Common myeloid progenitor, CD34-positive (primary cell): ENCODE measurements at regions of chr4 and their contacts with region 1.

Region 1: GRCh38 chr4:48127682-48128394 is 6.2 kb downstream of the TXK start:
- DNase-seq: peak; percentile 54 to 75 (median 74)
- H3K4me3 ChIP-seq: peak overlapping the region in 2 of 7 experiments; percentile 20 to 44
- H3K27ac ChIP-seq: no peak overlapping the region
- H3K4me1 ChIP-seq: peaks cover 0 to 30% (median 24%) of the 10 kb centered on the region in 4 experiments
- H3K27me3 ChIP-seq: no peaks in the 10 kb centered on the region

Region 2: GRCh38 chr4:48141048-48141447 is 13.2 kb after region 1 on chr4:
- CTCF ChIA-PET with region 1: interaction called, 47 read pairs
- POLR2A ChIA-PET with region 1: interaction called, 3 read pairs
- DNase-seq: peak; percentile 41 to 66 (median 64)
- H3K4me3 ChIP-seq: no peak overlapping the region
- H3K27ac ChIP-seq: no peak overlapping the region
- H3K4me1 ChIP-seq: peaks cover 0 to 9% (median 7%) of the 10 kb centered on the region in 4 experiments
- H3K27me3 ChIP-seq: no peaks in the 10 kb centered on the region

Region 3: GRCh38 chr4:48254381-48255071 is 126.7 kb after region 1 on chr4:
- CTCF ChIA-PET with region 1: no interaction called
- POLR2A ChIA-PET with region 1: no interaction called
- DNase-seq: no peak
- H3K4me3 ChIP-seq: no peak overlapping the region
- H3K27ac ChIP-seq: peak overlapping the region in 1 of 2 experiments; percentile 10
- H3K4me1 ChIP-seq: peaks cover 4 to 22% (median 10%) of the 10 kb centered on the region in 4 experiments
- H3K27me3 ChIP-seq: no peaks in the 10 kb centered on the region

Region 4: DNA sequence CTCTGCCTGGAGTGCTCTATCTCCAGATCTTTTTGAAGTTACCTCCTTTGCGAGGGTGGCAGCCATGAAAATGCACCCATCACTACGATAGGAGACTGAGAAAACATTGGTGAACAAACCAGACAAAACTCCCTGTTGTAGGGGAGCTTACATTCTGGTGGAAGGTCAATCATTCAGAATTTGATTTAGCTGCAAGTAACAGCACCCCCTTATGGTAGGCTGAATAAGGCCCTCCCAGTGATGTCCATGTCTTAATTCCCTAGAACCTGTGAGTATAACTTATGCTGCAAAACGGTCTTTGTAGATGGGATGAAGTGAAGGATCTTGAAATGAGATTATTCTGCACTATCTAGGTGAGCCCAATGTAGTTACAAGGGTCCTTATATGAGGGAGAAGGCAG is 147.4 kb after region 1 on chr4:
- CTCF ChIA-PET with region 1: interaction called, 43 read pairs
- POLR2A ChIA-PET with region 1: no interaction called
- DNase-seq: peak; percentile 64 to 76 (median 75)
- H3K4me3 ChIP-seq: no peak overlapping the region
- H3K27ac ChIP-seq: no peak overlapping the region
- H3K4me1 ChIP-seq: peaks cover 12 to 23% (median 16%) of the 10 kb centered on the region in 4 experiments
- H3K27me3 ChIP-seq: no peaks in the 10 kb centered on the region

Region 5: GRCh38 chr4:48546336-48546735 is 418.5 kb after region 1 on chr4:
- CTCF ChIA-PET with region 1: interaction called, 33 read pairs
- POLR2A ChIA-PET with region 1: no interaction called
- DNase-seq: peak; percentile 51 to 78 (median 72)
- H3K4me3 ChIP-seq: no peak overlapping the region
- H3K27ac ChIP-seq: no peak overlapping the region
- H3K4me1 ChIP-seq: no peaks in the 10 kb centered on the region
- H3K27me3 ChIP-seq: no peaks in the 10 kb centered on the region